Transverse colon (tissue), 4 donors: ENCODE measurements at regions of chr18 and their contacts with region 1.

Region 1: GRCh38 chr18:22813648-22814328 is 119.3 kb upstream of the RBBP8 start:
- DNase-seq: no peak
- H3K4me3 ChIP-seq: no peak overlapping the region
- H3K27ac ChIP-seq: no peak overlapping the region
- H3K4me1 ChIP-seq: peaks cover 0 to 24% (median 7%) of the 10 kb centered on the region in 4 donors
- H3K27me3 ChIP-seq: no peaks in the 10 kb centered on the region
- CTCF ChIP-seq: peak; percentile 40 to 50 (median 41)
- EP300 ChIP-seq: no peak
- POLR2A ChIP-seq: no peak

Region 2: DNA sequence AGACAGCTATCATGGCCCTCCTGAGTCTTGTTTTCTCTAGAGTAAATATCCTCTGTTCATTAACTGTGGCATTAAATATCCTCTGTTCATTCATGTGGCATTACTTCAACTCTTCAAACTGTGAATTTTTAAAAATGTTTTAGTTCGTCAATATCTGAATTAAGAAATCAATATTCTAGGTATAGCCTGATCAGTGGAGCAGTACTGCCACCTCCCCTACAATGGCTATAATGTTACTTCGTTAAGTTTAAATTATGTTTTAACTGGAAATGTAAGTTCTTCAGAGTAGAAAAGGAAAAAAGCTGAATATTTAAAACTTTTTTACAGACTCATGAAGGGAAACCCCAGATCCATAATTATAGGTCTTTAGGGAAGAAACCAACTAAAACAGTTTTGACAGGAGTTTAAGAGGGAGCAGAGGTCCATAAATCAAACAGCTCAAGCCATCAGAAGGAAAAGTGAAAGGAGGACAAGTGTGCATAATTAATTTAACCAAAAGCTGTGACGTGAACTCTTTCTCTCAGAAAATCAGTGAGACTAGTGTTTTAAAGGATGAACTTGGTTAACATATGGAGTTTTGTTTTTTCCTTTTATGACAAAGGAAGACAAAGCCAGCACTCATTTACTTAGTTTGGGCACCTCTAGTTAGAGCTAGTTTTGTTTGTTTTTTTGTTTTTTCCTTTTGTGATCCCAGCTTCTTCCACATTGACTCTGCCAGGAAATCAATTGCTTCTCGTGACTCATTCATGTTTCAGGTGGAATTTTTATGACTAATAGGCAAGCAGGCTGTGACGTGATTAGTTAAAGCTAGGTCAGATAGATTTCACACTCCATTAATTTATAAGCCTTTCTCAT is 164.3 kb after region 1 on chr18:
- in situ Hi-C with region 1: loop called in 2 of 4 experiments (anchors 10 kb)
- intact Hi-C with region 1: no loop called
- DNase-seq: no peak
- H3K4me3 ChIP-seq: no peak overlapping the region
- H3K27ac ChIP-seq: no peak overlapping the region
- H3K4me1 ChIP-seq: peaks cover 4 to 34% (median 14%) of the 10 kb centered on the region in 4 donors
- H3K27me3 ChIP-seq: no peaks in the 10 kb centered on the region
- CTCF ChIP-seq: no peak
- EP300 ChIP-seq: no peak
- POLR2A ChIP-seq: no peak

Region 3: DNA sequence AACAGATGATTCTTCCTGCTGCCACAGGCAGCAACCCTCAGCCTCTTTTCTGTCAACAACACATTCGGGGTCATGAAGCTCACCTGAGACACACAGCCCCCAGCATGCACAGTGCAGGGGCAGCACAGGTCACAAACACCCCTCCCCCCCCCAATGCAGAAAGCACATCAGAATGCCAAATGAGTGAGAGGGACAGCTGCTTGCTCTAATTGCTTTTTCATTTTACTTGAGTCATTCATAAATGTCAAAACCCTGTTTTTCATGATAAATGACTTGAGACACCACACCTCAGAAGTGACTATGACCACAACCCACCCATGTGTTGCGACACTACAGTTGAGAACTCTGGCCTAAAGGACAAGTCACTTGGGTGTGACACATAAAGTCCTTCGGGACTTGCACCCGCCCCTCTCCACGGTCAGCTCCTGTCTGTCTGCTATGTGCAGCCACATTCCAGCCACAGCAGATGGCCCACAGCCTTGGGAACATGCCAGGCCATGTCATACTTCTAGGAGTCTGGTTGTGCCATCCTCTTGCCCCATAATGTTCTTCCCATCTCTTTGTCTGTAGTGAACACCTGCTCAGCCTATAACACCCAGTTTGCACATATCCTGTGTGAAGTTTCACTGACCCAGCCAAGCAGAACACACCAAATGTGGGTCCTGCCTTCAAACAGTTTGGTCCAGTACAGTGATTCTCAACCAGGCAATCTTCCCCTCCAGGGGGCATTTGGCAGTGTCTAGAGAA is 609.1 kb after region 1 on chr18:
- in situ Hi-C with region 1: loop called in 1 of 4 experiments (anchors 25 kb)
- intact Hi-C with region 1: no loop called
- DNase-seq: peak; percentile 77
- H3K4me3 ChIP-seq: no peak overlapping the region
- H3K27ac ChIP-seq: peak overlapping the region in 3 of 4 donors; percentile 50 to 72 (median 62)
- H3K4me1 ChIP-seq: peaks cover 0 to 16% (median 6%) of the 10 kb centered on the region in 4 donors
- H3K27me3 ChIP-seq: no peaks in the 10 kb centered on the region
- CTCF ChIP-seq: no peak
- EP300 ChIP-seq: no peak
- POLR2A ChIP-seq: no peak